ENCODE measurements at regions of chr6 and their contacts with region 1.

Region 1: DNA sequence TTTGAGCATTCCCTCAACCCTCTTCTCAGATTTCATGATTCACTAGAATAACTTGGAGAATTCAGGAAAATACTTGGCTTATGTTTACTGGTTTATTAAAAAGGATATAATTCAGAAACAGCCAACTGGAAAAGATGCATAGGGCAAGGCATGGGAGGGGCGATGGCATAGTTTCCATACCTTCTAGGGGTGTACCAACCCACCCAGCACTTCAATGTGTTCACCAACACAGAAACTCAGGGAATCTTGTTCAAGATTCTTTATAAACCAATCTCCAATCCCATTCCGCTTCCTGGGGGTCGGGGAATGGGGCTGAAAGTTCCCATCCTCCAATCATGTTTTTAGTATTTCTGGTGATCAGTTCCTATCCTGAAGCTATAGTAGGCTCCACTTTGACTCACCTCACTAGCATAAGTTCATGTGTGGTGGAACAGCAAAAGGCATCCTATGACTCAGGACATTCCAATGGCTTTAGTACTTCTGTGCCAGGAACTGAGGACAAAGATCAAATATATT is 164.4 kb downstream of the SIM1 start:
- DNase-seq: peak; percentile 67 to 97
- H3K4me3 ChIP-seq: peak overlapping the region; percentile 36
- H3K27ac ChIP-seq: peak overlapping the region; percentile 96
- H3K4me1 ChIP-seq: peaks cover 69% of the 10 kb centered on the region
- H3K27me3 ChIP-seq: no peaks in the 10 kb centered on the region
- CTCF ChIP-seq: no peak

Region 2: GRCh38 chr6:100121854-100122609 is 178.2 kb before region 1 on chr6:
- CTCF ChIA-PET with region 1: no interaction called
- POLR2A ChIA-PET with region 1: no interaction called
- intact Hi-C with region 1: no loop called
- DNase-seq: no peak
- H3K4me3 ChIP-seq: no peak overlapping the region
- H3K27ac ChIP-seq: no peak overlapping the region
- H3K4me1 ChIP-seq: peaks cover 2% of the 10 kb centered on the region
- H3K27me3 ChIP-seq: no peaks in the 10 kb centered on the region
- CTCF ChIP-seq: no peak

Region 3: DNA sequence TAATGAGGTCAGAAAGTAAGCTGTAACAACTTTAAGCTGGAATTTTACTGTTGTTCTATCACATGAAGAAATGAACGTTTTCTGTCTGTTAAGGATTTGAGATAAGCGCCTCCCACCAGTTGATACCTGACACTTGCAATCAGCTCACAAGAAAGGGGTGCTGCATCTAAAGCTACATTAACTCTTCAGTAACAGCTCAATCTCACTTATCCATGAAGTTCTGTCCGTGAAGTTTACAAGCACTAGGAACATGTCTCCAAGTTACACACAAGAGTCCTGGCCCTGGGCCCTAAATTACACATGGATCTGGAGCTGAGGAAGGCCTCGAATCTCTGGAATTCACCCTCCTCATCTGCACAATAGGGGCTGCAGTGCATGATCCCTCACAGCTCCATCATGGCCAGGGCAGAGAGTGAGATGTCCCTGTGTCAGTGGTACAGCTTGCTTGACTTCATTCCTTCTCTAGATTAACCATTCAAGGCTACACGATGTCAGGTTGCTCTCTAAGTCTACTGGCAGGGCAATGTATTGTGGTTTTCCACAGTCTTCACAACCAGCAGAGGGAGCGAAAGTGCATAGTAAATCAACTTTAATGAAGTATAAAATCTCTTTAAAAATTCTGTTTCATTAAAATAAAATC is 123.8 kb before region 1 on chr6:
- CTCF ChIA-PET with region 1: interaction called, 3 read pairs
- POLR2A ChIA-PET with region 1: no interaction called
- intact Hi-C with region 1: loop called (anchors 1 kb)
- DNase-seq: peak; percentile 42 to 70
- H3K4me3 ChIP-seq: 0 out of 2 replicates have a peak overlapping the region, but pooled peaks have one; percentile 8
- H3K27ac ChIP-seq: peak overlapping the region; percentile 74
- H3K4me1 ChIP-seq: peaks cover 24% of the 10 kb centered on the region
- H3K27me3 ChIP-seq: no peaks in the 10 kb centered on the region
- CTCF ChIP-seq: peak; percentile 67

Region 4: DNA sequence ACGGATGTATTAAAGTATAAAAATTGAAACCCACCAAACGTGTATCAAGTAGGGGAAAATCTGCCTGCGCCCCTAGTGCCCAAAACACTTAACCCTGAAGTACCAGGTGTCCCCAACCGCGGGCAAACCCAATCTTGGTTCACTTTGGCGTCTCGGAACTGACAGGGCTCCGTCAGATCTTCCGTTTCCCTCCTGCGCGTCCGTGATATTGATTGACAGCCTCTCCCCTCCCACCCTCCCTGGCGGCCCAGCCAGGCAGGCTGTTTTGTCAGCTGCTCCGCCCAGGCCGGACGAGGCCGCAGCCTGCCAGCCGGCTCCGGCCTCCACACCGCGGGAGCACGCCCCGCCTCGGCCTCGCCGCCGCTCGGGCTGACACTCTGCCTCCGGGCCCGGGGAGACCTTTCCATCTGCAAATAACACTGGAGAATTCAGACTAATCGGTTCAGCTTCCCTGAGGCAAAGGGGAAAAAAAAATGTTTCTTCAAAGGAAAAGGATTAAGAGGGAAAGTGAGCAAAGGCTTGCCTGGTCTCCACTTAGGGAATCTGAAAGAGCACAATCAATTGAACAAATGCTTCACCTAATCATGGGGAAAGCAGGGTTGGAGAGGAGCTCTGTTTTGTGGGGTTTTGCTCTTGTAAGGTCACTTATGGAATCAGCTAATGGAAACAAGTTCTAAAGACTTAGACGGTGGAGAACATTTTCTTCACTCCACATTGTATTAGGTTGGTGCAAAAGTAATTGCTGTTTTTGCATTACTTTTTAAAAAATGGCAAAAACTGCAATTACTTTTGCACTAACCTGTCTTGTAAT is 71.2 kb before region 1 on chr6:
- CTCF ChIA-PET with region 1: no interaction called
- POLR2A ChIA-PET with region 1: interaction called, 7 read pairs
- intact Hi-C with region 1: loop called (anchors 2 kb)
- DNase-seq: peak; percentile 72 to 77
- H3K4me3 ChIP-seq: peak overlapping the region; percentile 58
- H3K27ac ChIP-seq: peak overlapping the region; percentile 45
- H3K4me1 ChIP-seq: peaks cover 31% of the 10 kb centered on the region
- H3K27me3 ChIP-seq: no peaks in the 10 kb centered on the region
- CTCF ChIP-seq: no peak

Region 5: DNA sequence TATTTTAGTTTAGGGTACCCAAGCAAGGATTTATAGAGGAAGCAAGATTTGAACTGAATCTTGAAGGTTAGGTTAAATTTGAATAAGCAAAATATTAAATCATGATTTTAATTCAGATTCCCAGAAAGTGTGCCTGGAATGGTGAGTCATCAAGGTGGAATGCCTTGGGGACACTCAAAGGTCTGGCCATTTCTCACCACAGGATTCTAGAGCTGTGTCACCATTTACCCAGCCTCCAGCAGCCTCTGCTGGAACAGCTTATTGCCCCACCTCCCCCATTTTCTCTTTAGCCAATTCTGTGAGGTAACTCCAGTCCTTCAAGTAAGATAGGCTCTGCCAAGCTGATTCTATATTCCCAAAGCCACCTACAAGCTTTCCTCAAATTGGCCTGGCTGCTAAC is 17.0 kb before region 1 on chr6:
- CTCF ChIA-PET with region 1: no interaction called
- POLR2A ChIA-PET with region 1: interaction called, 4 read pairs
- intact Hi-C with region 1: loop called (anchors 1 kb)
- DNase-seq: peak; percentile 76 to 81
- H3K4me3 ChIP-seq: no peak overlapping the region
- H3K27ac ChIP-seq: peak overlapping the region; percentile 31
- H3K4me1 ChIP-seq: peaks cover 14% of the 10 kb centered on the region
- H3K27me3 ChIP-seq: no peaks in the 10 kb centered on the region
- CTCF ChIP-seq: no peak

Region 6: GRCh38 chr6:100504786-100505737 is 204.8 kb after region 1 on chr6:
- CTCF ChIA-PET with region 1: no interaction called
- POLR2A ChIA-PET with region 1: interaction called, 4 read pairs
- intact Hi-C with region 1: loop called (anchors 10 kb)
- DNase-seq: peak in 1 of 2 experiments; percentile 60
- H3K4me3 ChIP-seq: no peak overlapping the region
- H3K27ac ChIP-seq: no peak overlapping the region
- H3K4me1 ChIP-seq: no peaks in the 10 kb centered on the region
- H3K27me3 ChIP-seq: no peaks in the 10 kb centered on the region
- CTCF ChIP-seq: no peak